ENCODE measurements at regions of chr5 and their contacts with region 1.

Region 1: GRCh38 chr5:116068028-116068632 is 16.7 kb upstream of the COMMD10 start:
- DNase-seq: peak in 5 of 14 experiments; percentile 6 to 78 (median 56)
- ATAC-seq: peak; percentile 58
- H3K4me3 ChIP-seq: no peak overlapping the region
- H3K4me3 Mint-ChIP-seq: no peak overlapping the region
- H3K27ac ChIP-seq: no peak overlapping the region
- H3K27ac Mint-ChIP-seq: no peak overlapping the region
- H3K4me1 ChIP-seq: no peaks in the 10 kb centered on the region
- H3K4me1 Mint-ChIP-seq: no peaks in the 10 kb centered on the region
- H3K27me3 ChIP-seq: peaks cover 0 to 17% of the 10 kb centered on the region in 2 experiments
- H3K27me3 Mint-ChIP-seq: peaks cover 30% of the 10 kb centered on the region
- CTCF ChIP-seq: peak; percentile 74

Region 2: DNA sequence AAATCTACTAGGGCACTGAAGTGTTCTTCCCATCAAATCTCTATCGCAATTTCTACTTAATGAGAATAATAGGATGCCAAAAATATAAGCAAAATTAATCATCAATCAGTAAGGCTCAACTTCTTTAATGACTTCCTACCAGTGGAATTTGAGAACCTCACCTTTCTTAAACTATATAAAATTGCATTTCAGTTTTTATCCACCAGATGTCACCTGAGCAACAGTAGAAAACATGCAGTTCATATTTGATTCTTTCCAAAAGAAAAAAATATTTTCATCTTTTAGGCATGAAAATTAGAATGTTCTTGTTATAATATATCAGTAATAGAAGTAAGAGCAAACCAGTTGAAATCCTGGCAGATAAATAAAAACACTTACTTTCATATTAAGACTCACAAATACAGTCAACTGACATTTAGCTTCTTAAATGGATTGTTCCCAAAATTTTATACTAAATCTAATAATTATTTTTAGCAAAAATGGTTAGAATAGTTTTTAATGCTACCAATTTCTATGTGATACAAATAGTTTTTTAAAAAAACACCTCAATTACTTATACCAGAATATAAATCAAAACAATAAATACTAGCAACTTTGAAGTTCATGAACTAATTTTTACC is 758.3 kb before region 1 on chr5:
- CTCF ChIA-PET with region 1: no interaction called
- POLR2A ChIA-PET with region 1: no interaction called
- intact Hi-C with region 1: loop called (anchors 2 to 5 kb)
- DNase-seq: peak in 3 of 14 experiments; percentile 61 to 68 (median 66)
- ATAC-seq: peak; percentile 52
- H3K4me3 ChIP-seq: no peak overlapping the region
- H3K4me3 Mint-ChIP-seq: no peak overlapping the region
- H3K27ac ChIP-seq: no peak overlapping the region
- H3K27ac Mint-ChIP-seq: no peak overlapping the region
- H3K4me1 ChIP-seq: no peaks in the 10 kb centered on the region
- H3K4me1 Mint-ChIP-seq: no peaks in the 10 kb centered on the region
- H3K27me3 ChIP-seq: peaks cover 4 to 14% of the 10 kb centered on the region in 2 experiments
- H3K27me3 Mint-ChIP-seq: peaks cover 48% of the 10 kb centered on the region
- CTCF ChIP-seq: peak; percentile 83

Region 3: DNA sequence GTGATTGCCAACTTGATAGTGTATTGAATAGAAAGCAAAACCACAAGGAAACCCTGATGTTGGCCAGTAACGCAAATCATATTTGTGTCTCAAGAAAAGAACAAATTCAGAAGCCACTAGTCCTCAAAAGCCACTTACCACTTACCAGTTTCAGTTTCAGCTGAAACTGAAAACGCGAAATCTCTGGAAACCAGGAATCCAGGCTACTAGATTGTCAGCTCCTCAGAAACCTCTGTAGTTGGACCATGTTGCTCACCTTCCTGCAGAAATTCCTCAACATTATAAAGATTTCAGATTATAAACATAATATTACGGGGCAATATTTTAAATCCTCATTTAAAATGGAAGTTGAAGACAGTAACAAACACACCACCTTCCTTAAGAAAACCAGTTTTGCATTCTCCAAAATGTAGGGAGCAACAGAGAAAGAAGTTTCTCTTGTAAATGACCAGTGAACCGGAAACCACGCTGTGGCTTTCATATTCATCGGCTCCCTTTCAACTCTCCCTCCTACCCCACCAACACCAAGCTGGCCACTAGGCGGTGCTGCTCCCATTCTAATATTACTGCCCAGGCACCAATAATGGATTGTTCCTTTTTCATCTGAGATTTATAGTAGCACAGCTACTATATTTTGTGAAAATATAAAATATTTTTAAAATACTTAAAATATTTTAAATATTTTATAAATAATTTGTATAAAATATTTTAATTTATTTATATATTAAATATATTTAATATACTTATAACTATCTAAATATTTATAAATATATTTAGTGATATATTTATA is 433.6 kb before region 1 on chr5:
- CTCF ChIA-PET with region 1: no interaction called
- POLR2A ChIA-PET with region 1: no interaction called
- intact Hi-C with region 1: loop called (anchors 1 kb)
- DNase-seq: peak; percentile 67 to 88 (median 78)
- ATAC-seq: peak; percentile 96
- H3K4me3 ChIP-seq: peak overlapping the region; percentile 30
- H3K4me3 Mint-ChIP-seq: peak overlapping the region; percentile 64
- H3K27ac ChIP-seq: no peak overlapping the region
- H3K27ac Mint-ChIP-seq: no peak overlapping the region
- H3K4me1 ChIP-seq: peaks cover 5% of the 10 kb centered on the region
- H3K4me1 Mint-ChIP-seq: peaks cover 8% of the 10 kb centered on the region
- H3K27me3 ChIP-seq: no peaks in the 10 kb centered on the region
- H3K27me3 Mint-ChIP-seq: no peaks in the 10 kb centered on the region
- CTCF ChIP-seq: peak; percentile 92